ENCODE measurements at regions of chr14 and their contacts with region 1.

Region 1: GRCh38 chr14:34059855-34060638 is 109.2 kb upstream of the EGLN3 start:
- DNase-seq: peak; percentile 75 to 85
- ATAC-seq: peak; percentile 92 to 97 (median 94)
- H3K4me3 ChIP-seq: peak overlapping the region; percentile 41 to 84 (median 65)
- H3K27ac ChIP-seq: peak overlapping the region; percentile 91 to 98 (median 94)
- H3K4me1 ChIP-seq: peaks cover 11 to 51% (median 19%) of the 10 kb centered on the region in 9 donors
- H3K27me3 ChIP-seq: peaks cover 0 to 2% (median 0%) of the 10 kb centered on the region in 7 donors
- CTCF ChIP-seq: peak in 6 of 9 donors; percentile 27 to 63 (median 52)

Region 2: DNA sequence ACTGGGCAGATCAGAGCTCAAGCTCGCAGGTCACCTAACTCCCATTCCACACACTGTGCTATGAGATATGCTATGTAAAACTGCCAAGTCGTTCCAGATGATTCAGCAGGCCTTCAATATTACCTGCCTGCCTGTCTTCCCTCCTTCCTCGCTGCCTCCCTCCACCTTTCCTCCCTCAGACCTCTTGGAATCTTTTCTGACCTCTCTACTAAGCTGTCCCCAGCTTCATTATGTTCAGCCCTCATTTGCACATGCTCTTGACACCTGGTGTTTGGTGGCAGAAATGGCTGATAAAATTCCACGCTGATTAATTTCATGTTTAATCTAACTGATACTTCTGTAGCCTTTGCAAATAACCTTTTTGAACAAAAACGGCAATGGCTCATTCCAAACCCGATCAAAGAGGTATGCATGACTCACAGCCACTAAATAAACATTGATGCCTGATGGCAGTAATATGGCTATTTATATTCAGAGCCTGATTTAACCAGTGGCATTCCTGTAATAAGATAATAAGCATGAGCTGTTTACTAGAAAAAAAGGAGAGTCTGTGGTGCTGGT is 21.6 kb after region 1 on chr14:
- intact Hi-C with region 1: loop called in 2 of 10 experiments (anchors 2 kb)
- DNase-seq: no peak
- ATAC-seq: peak; percentile 53 to 89 (median 78)
- H3K4me3 ChIP-seq: no peak overlapping the region
- H3K27ac ChIP-seq: peak overlapping the region; percentile 79 to 97 (median 94)
- H3K4me1 ChIP-seq: peaks cover 0 to 48% (median 19%) of the 10 kb centered on the region in 9 donors
- H3K27me3 ChIP-seq: no peaks in the 10 kb centered on the region
- CTCF ChIP-seq: no peak

Region 3: GRCh38 chr14:34128665-34129064 is 68.6 kb after region 1 on chr14:
- intact Hi-C with region 1: loop called in 1 of 10 experiments (anchors 5 kb)
- DNase-seq: peak; percentile 24 to 66
- ATAC-seq: peak in 6 of 8 donors; percentile 21 to 73 (median 62)
- H3K4me3 ChIP-seq: no peak overlapping the region
- H3K27ac ChIP-seq: peak overlapping the region in 7 of 10 donors; percentile 8 to 89 (median 50)
- H3K4me1 ChIP-seq: peaks cover 0 to 35% (median 13%) of the 10 kb centered on the region in 9 donors
- H3K27me3 ChIP-seq: no peaks in the 10 kb centered on the region
- CTCF ChIP-seq: no peak

Region 4: GRCh38 chr14:34237081-34237480 is 177.0 kb after region 1 on chr14:
- intact Hi-C with region 1: loop called in 1 of 10 experiments (anchors 10 kb)
- DNase-seq: no peak
- ATAC-seq: no peak
- H3K4me3 ChIP-seq: no peak overlapping the region
- H3K27ac ChIP-seq: no peak overlapping the region
- H3K4me1 ChIP-seq: peaks cover 0 to 51% (median 10%) of the 10 kb centered on the region in 9 donors
- H3K27me3 ChIP-seq: no peaks in the 10 kb centered on the region
- CTCF ChIP-seq: no peak

Measured in heart right ventricle (tissue), 16 donors.